AG04450 (cell line): ENCODE measurements at regions of chr20 and their contacts with region 1.

Region 1: GRCh38 chr20:5222919-5223634 is 93.7 kb downstream of the PROKR2 start:
- DNase-seq: peak; percentile 30
- H3K4me3 ChIP-seq: no peak overlapping the region
- H3K27ac ChIP-seq: no peak overlapping the region
- H3K27me3 ChIP-seq: no peaks in the 10 kb centered on the region
- CTCF ChIP-seq: peak; percentile 96

Region 2: GRCh38 chr20:5156675-5157448 is 66.2 kb before region 1 on chr20:
- CTCF ChIA-PET with region 1: interaction called, 10 read pairs
- POLR2A ChIA-PET with region 1: no interaction called
- DNase-seq: no peak
- H3K4me3 ChIP-seq: no peak overlapping the region
- H3K27ac ChIP-seq: no peak overlapping the region
- H3K27me3 ChIP-seq: no peaks in the 10 kb centered on the region
- CTCF ChIP-seq: no peak

Region 3: GRCh38 chr20:5205348-5206210 is 17.5 kb before region 1 on chr20:
- CTCF ChIA-PET with region 1: interaction called, 157 read pairs
- POLR2A ChIA-PET with region 1: no interaction called
- DNase-seq: peak; percentile 47
- H3K4me3 ChIP-seq: no peak overlapping the region
- H3K27ac ChIP-seq: no peak overlapping the region
- H3K27me3 ChIP-seq: no peaks in the 10 kb centered on the region
- CTCF ChIP-seq: peak; percentile 97

Region 4: DNA sequence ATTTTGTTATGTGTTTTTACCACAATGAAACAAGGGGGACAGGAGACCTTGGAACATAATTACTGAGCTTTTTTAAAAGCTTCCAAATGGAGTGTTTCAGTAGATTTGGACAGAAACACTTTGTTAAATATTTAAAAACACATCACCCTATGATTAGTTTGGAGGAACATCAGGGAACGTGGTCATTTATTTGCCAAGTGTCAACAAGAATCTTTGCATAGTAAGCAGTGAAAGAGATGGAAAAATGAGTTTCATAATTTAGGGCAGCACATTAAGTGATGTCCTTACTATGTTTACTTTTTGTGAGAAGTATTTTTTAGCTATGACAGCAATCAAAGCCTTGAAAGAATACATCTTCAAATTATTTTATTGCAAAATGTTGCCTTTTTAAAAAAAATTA is 11.1 kb after region 1 on chr20:
- CTCF ChIA-PET with region 1: interaction called, 11 read pairs
- POLR2A ChIA-PET with region 1: no interaction called
- DNase-seq: no peak
- H3K4me3 ChIP-seq: no peak overlapping the region
- H3K27ac ChIP-seq: no peak overlapping the region
- H3K27me3 ChIP-seq: peaks cover 9% of the 10 kb centered on the region
- CTCF ChIP-seq: no peak

Region 5: GRCh38 chr20:5268449-5268848 is 45.4 kb after region 1 on chr20:
- CTCF ChIA-PET with region 1: interaction called, 11 read pairs
- POLR2A ChIA-PET with region 1: no interaction called
- DNase-seq: no peak
- H3K4me3 ChIP-seq: no peak overlapping the region
- H3K27ac ChIP-seq: no peak overlapping the region
- H3K27me3 ChIP-seq: peaks cover 3% of the 10 kb centered on the region
- CTCF ChIP-seq: no peak

Region 6: DNA sequence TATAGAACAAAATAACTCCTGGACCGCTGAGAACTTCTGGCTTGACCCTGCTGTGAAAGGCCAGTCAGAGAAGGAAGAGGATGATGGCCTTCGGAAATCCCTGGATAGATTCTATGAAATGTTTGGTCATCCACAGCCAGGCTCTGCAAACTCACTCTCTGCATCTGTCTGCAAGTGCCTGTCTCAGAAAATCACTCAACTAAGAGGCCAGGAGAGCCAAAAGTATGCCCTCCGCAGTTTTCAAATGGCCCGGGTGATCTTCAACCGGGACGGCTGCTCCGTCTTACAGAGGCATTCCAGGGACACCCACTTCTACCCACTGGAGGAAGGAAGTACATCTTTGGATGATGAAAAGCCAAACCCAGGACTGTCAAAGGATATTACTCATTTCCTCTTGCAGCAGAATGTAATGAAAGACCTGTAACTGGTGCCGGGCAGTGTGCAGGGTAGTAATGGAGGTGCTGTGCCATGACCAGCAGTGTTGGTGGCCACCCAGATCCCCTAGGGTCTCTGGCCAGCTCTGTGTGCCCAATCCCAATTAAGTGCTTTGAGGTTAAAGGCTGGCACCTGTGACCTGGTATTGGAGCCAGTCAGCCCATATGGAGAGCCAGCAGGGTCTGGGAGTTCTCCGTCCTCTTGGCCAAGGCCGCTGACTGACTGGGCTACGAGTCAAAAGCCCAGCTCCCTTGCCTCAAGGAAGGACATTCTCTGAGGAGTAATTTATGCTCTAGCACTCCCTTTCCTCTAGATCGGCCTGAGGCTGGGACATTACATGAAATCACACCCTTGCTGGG is 640.2 kb after region 1 on chr20:
- CTCF ChIA-PET with region 1: no interaction called
- POLR2A ChIA-PET with region 1: no interaction called
- DNase-seq: no peak
- H3K4me3 ChIP-seq: no peak overlapping the region
- H3K27ac ChIP-seq: peak overlapping the region; percentile 4
- H3K27me3 ChIP-seq: no peaks in the 10 kb centered on the region
- CTCF ChIP-seq: no peak